ENCODE measurements at regions of chr7 and their contacts with region 1.

Region 1: GRCh38 chr7:68050627-68051026 is 1054.0 kb downstream of the TYW1 start:
- DNase-seq: no peak
- ATAC-seq: no peak
- H3K4me3 Mint-ChIP-seq: no peak overlapping the region
- H3K27ac Mint-ChIP-seq: no peak overlapping the region
- H3K4me1 Mint-ChIP-seq: no peaks in the 10 kb centered on the region
- H3K27me3 Mint-ChIP-seq: no peaks in the 10 kb centered on the region
- CTCF ChIP-seq: no peak

Region 2: DNA sequence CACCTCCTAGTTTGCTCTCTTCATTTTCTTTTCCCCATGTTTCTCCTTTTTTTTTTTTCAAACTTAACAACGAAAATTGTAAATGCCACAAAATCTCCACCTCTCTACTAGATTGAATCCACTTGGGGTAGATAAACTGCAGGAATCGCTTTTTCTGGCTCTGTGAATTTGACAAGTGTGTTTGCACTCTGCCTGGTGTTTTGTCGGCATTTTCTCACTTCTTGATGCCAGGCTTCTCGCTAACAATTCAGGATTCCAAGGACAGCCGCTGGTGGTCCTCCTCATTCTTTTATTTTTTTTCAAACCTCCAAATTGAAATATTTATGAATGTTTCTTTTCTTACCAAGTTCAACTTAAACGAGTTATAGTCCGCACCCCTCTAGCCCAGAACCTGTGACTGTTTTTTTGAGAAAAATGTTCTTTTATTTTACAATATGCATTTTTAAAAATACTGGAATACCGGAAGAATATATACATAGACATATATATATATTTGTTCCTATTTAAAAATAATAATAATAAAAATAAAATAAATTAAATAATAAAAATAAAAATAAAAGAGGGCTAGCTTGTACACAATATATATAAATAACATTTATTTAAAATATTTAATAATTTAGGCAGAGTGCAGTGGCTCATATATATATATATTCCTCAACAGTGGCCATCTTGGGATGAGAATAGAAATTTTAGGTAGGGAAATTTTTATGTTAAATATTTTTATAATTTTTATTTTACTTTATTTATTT is 515.2 kb before region 1 on chr7:
- CTCF ChIA-PET with region 1: no interaction called
- POLR2A ChIA-PET with region 1: no interaction called
- DNase-seq: no peak
- ATAC-seq: no peak
- H3K4me3 Mint-ChIP-seq: no peak overlapping the region
- H3K27ac Mint-ChIP-seq: no peak overlapping the region
- H3K4me1 Mint-ChIP-seq: no peaks in the 10 kb centered on the region
- H3K27me3 Mint-ChIP-seq: peaks cover 3% of the 10 kb centered on the region
- CTCF ChIP-seq: no peak

Region 3: GRCh38 chr7:67758551-67758950 is 292.1 kb before region 1 on chr7:
- CTCF ChIA-PET with region 1: no interaction called
- POLR2A ChIA-PET with region 1: no interaction called
- DNase-seq: no peak
- ATAC-seq: no peak
- H3K4me3 Mint-ChIP-seq: no peak overlapping the region
- H3K27ac Mint-ChIP-seq: no peak overlapping the region
- H3K4me1 Mint-ChIP-seq: no peaks in the 10 kb centered on the region
- H3K27me3 Mint-ChIP-seq: no peaks in the 10 kb centered on the region
- CTCF ChIP-seq: no peak

Region 4: GRCh38 chr7:68063166-68063565 is 12.5 kb after region 1 on chr7:
- CTCF ChIA-PET with region 1: interaction called, 12 read pairs
- POLR2A ChIA-PET with region 1: no interaction called
- DNase-seq: peak; percentile 49
- ATAC-seq: peak; percentile 79
- H3K4me3 Mint-ChIP-seq: no peak overlapping the region
- H3K27ac Mint-ChIP-seq: no peak overlapping the region
- H3K4me1 Mint-ChIP-seq: peaks cover 19% of the 10 kb centered on the region
- H3K27me3 Mint-ChIP-seq: no peaks in the 10 kb centered on the region
- CTCF ChIP-seq: peak; percentile 55